Activated CD4-positive, alpha-beta memory T cell treated with anti-CD3 and anti-CD28 coated beads for 36 hours (primary cell): ENCODE measurements at regions of chr5 and their contacts with region 1.

Region 1: DNA sequence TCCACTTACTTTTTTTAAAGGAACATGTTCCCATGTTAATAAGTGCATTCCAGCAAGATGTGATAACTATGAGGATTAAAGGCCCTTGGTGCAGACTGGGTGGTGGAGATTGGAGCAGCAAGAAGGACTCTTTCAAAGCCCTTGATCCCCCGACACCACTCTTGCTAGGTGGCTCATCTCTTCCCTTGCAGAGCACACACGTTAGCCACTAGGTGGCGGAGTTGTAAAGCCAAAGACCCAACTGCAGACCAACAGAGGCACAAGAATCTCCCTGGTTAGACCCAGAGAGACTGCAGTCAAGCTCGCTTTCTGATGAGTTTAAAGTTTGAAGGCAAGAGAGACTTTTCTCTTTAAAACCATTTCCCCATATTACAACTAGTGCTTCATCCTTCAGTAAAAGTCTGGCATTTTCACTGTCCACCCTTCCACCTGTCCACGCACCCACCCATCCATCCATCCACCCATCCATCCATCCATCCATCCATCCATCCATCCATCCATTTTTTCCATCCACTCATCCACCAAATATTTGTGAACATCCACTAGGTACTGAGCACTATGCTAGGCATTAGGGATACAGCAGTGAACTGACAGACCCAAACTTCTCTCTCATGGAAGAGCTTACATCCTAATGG is 226.9 kb downstream of the MSX2 start:
- DNase-seq: peak; percentile 71
- H3K4me3 Mint-ChIP-seq: no peak overlapping the region
- H3K27ac Mint-ChIP-seq: no peak overlapping the region
- H3K4me1 Mint-ChIP-seq: peaks cover 7% of the 10 kb centered on the region
- H3K27me3 Mint-ChIP-seq: peaks cover 9% of the 10 kb centered on the region

Region 2: GRCh38 chr5:175045820-175046219 is 94.6 kb after region 1 on chr5:
- CTCF ChIA-PET with region 1: no interaction called
- POLR2A ChIA-PET with region 1: no interaction called
- intact Hi-C with region 1: no loop called
- DNase-seq: no peak
- H3K4me3 Mint-ChIP-seq: no peak overlapping the region
- H3K27ac Mint-ChIP-seq: no peak overlapping the region
- H3K4me1 Mint-ChIP-seq: no peaks in the 10 kb centered on the region
- H3K27me3 Mint-ChIP-seq: peaks cover 1% of the 10 kb centered on the region

Region 3: GRCh38 chr5:175059687-175060211 is 108.5 kb after region 1 on chr5:
- CTCF ChIA-PET with region 1: no interaction called
- POLR2A ChIA-PET with region 1: no interaction called
- intact Hi-C with region 1: loop called (anchors 5 kb)
- DNase-seq: peak; percentile 70
- H3K4me3 Mint-ChIP-seq: peak overlapping the region; percentile 52
- H3K27ac Mint-ChIP-seq: peak overlapping the region; percentile 28
- H3K4me1 Mint-ChIP-seq: peaks cover 17% of the 10 kb centered on the region
- H3K27me3 Mint-ChIP-seq: no peaks in the 10 kb centered on the region

Region 4: DNA sequence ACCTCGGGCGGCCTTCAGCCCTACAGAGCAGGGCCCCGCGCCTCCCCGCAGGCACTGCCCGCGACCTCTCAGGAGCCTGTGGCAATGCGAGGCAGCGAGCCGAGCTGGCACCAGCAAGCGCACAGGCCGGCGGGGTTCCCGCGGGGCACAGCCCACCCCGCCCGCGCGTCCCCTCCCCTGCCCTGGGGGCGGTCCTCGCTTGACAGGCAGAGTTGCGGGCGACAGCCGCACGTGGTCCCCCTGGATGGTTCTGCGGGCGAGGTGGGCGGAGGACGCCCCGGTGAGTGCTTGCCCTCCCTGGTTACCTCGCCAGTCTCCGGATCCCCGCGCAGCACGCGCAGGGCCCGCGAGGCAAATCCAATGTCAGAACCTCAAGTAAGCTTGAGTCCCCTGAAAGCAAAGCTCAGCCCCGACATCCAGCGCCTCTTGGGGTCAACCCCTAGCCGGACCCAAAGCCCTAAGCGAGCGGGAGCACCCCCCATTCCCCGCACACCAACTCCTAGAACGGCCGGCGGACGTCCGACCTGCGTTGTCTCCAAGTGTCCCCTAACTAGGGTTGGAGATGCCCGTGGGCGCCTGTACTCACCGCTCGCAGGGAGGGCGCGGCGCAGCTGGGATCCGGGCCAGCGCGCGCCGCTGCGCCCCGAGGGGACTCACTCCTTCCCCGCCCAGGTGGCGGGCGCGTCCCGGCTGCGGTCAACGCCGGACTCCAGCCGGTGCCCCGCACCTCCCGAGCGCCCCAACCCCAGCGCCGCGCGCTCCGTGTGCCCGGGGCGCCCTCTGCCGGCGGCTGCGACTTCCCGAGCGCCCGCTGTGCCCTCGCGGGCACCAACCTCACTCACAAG is 493.0 kb after region 1 on chr5 and contains the start of gene DRD1:
- CTCF ChIA-PET with region 1: interaction called, 26 read pairs
- POLR2A ChIA-PET with region 1: no interaction called
- intact Hi-C with region 1: loop called (anchors 1 kb)
- DNase-seq: peak; percentile 59
- H3K4me3 Mint-ChIP-seq: peak within 1 kb of the TSS; percentile 51
- H3K27ac Mint-ChIP-seq: no peak within 1 kb of the TSS
- H3K4me1 Mint-ChIP-seq: peaks cover 10% of the 10 kb centered on the region
- H3K27me3 Mint-ChIP-seq: peaks cover 58% of the 10 kb centered on the region
- total RNA-seq, gene DRD1: not detected

Region 5: GRCh38 chr5:175572886-175573285 is 621.6 kb after region 1 on chr5:
- CTCF ChIA-PET with region 1: no interaction called
- POLR2A ChIA-PET with region 1: no interaction called
- intact Hi-C with region 1: loop called (anchors 5 kb)
- DNase-seq: no peak
- H3K4me3 Mint-ChIP-seq: no peak overlapping the region
- H3K27ac Mint-ChIP-seq: no peak overlapping the region
- H3K4me1 Mint-ChIP-seq: peaks cover 6% of the 10 kb centered on the region
- H3K27me3 Mint-ChIP-seq: peaks cover 5% of the 10 kb centered on the region